ENCODE measurements at regions of chr13 and their contacts with region 1.

Region 1: DNA sequence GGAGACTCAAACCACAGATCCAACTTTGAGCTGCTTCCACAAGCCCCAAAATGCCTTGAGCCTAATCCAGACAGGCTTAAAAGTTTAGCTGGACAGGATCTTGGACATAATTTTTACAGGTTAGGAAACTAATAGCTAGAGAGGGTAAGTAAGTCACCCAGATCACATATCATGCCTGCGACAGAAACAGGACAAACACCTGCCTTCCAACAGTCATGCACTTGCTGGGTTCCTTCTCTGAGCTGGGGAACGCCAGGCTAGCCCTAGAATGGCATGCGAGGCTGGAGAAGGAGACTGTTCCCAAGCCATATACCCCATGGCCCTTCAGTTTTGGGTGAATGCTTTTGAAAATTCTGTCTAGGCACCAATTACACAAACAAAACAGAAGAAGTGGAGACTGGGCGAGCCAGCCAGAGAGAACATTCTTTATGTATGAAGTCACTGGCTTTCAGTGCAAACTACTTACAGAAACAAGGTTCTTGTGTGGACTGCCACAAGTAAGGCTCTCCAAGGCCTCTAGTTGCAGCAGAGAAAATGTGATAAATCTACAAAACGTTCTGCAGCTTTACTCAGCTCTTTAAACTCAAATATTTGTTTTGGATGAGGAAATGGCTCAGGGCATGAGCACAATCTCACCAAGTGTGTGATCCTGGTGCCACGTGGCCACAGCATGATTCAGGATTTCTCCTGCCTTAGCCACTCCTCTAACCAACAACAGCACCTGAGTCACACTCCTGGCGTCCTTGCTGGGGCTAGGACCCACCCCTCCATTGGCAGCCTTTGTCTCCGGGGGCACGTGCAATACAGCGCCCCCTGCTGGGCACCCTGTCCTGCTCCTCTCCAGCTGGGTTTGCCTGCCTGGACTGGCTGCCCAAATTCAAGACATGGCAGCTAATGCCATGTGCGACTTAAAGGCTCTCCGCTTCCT is 73.4 kb upstream of the UBL3 start:
- DNase-seq: peak in 1 of 2 donors; percentile 94
- H3K4me3 ChIP-seq: no peak overlapping the region
- H3K27ac ChIP-seq: peak overlapping the region; percentile 82
- H3K4me1 ChIP-seq: peaks cover 43% of the 10 kb centered on the region
- H3K27me3 ChIP-seq: no peaks in the 10 kb centered on the region
- CTCF ChIP-seq: peak; percentile 33 to 86 (median 76)
- POLR2A ChIP-seq: no peak

Region 2: GRCh38 chr13:29850224-29850898 is 73.5 kb before region 1 on chr13 and contains the start of gene UBL3:
- intact Hi-C with region 1: loop called (anchors 10 kb)
- DNase-seq: peak in 1 of 2 donors; percentile 99
- H3K4me3 ChIP-seq: peak within 1 kb of the TSS; percentile 78 to 83
- H3K27ac ChIP-seq: peak within 1 kb of the TSS; percentile 98
- H3K4me1 ChIP-seq: peaks cover 6% of the 10 kb centered on the region
- H3K27me3 ChIP-seq: no peaks in the 10 kb centered on the region
- CTCF ChIP-seq: no peak
- POLR2A ChIP-seq: peak in 1 of 2 donors; percentile 88
- total RNA-seq, gene UBL3: 33.4 TPM

Region 3: DNA sequence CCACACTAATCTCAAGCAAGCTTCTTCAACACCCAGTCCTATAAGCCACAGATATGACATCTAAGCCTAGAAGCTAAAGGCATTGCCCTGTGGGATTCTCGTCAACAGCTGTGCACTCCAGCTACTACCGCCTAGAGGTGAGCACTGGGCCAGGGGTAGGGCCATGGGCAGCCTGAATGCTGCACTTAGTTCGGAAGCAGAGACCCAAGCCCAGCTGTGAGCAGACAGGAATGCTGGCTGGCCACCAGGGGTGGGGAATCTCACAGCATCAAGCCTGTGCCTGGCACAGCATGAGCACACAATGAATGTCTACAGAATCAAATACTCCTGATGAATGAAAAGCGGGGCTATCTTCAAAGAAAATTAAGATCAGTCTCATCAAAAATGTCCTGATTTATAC is 94.1 kb after region 1 on chr13:
- intact Hi-C with region 1: no loop called
- DNase-seq: no peak
- H3K4me3 ChIP-seq: no peak overlapping the region
- H3K27ac ChIP-seq: no peak overlapping the region
- H3K4me1 ChIP-seq: no peaks in the 10 kb centered on the region
- H3K27me3 ChIP-seq: no peaks in the 10 kb centered on the region
- CTCF ChIP-seq: no peak
- POLR2A ChIP-seq: no peak

Measured in vagina (tissue), 2 donors.